ENCODE measurements at regions of chr12 and their contacts with region 1.

Region 1: GRCh38 chr12:42332301-42333285 is 6.6 kb downstream of the PPHLN1 start:
- DNase-seq: no peak
- H3K4me3 Mint-ChIP-seq: no peak overlapping the region
- H3K27ac Mint-ChIP-seq: no peak overlapping the region
- H3K4me1 Mint-ChIP-seq: peaks cover 47% of the 10 kb centered on the region
- H3K27me3 Mint-ChIP-seq: no peaks in the 10 kb centered on the region

Region 2: GRCh38 chr12:42237052-42237852 is 95.3 kb before region 1 on chr12:
- CTCF ChIA-PET with region 1: interaction called, 11 read pairs
- POLR2A ChIA-PET with region 1: interaction called, 10 read pairs
- DNase-seq: peak; percentile 78
- H3K4me3 Mint-ChIP-seq: peak overlapping the region; percentile 79
- H3K27ac Mint-ChIP-seq: peak overlapping the region; percentile 75
- H3K4me1 Mint-ChIP-seq: peaks cover 52% of the 10 kb centered on the region
- H3K27me3 Mint-ChIP-seq: no peaks in the 10 kb centered on the region

Region 3: DNA sequence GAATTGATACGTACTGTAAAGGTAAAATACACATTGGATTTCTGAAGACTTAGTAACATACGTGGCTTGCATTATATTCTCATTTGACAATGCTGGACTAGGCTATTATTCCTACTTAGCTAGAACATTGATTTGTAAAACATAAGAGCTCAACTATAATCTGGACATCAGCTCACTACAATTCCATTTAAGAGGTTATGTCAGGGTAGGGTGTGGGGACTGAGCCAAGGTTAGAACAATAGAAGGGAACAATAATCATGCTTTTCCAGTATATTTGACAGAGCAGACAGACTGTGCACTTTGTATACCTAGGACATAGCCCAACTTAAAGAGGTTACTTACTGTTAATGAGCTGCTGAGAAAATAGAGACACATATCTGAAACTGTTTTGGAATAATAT is 17.5 kb before region 1 on chr12:
- CTCF ChIA-PET with region 1: no interaction called
- POLR2A ChIA-PET with region 1: no interaction called
- DNase-seq: no peak
- H3K4me3 Mint-ChIP-seq: no peak overlapping the region
- H3K27ac Mint-ChIP-seq: no peak overlapping the region
- H3K4me1 Mint-ChIP-seq: no peaks in the 10 kb centered on the region
- H3K27me3 Mint-ChIP-seq: no peaks in the 10 kb centered on the region

Region 4: GRCh38 chr12:42372154-42372791 is 39.7 kb after region 1 on chr12:
- CTCF ChIA-PET with region 1: interaction called, 10 read pairs
- POLR2A ChIA-PET with region 1: no interaction called
- DNase-seq: no peak
- H3K4me3 Mint-ChIP-seq: no peak overlapping the region
- H3K27ac Mint-ChIP-seq: no peak overlapping the region
- H3K4me1 Mint-ChIP-seq: no peaks in the 10 kb centered on the region
- H3K27me3 Mint-ChIP-seq: no peaks in the 10 kb centered on the region

Region 5: GRCh38 chr12:42482445-42483237 is 150.0 kb after region 1 on chr12:
- CTCF ChIA-PET with region 1: no interaction called
- POLR2A ChIA-PET with region 1: no interaction called
- DNase-seq: peak; percentile 46
- H3K4me3 Mint-ChIP-seq: peak overlapping the region; percentile 67
- H3K27ac Mint-ChIP-seq: no peak overlapping the region
- H3K4me1 Mint-ChIP-seq: peaks cover 12% of the 10 kb centered on the region
- H3K27me3 Mint-ChIP-seq: peaks cover 77% of the 10 kb centered on the region

Measured in activated CD4-positive, alpha-beta memory T cell treated with anti-CD3 and anti-CD28 coated beads, Interleukin-2, amount 10 ng/mL, durations not matched to agents 7 days and 5 days (primary cell).